ENCODE measurements at regions of chrX and their contacts with region 1.

Region 1: DNA sequence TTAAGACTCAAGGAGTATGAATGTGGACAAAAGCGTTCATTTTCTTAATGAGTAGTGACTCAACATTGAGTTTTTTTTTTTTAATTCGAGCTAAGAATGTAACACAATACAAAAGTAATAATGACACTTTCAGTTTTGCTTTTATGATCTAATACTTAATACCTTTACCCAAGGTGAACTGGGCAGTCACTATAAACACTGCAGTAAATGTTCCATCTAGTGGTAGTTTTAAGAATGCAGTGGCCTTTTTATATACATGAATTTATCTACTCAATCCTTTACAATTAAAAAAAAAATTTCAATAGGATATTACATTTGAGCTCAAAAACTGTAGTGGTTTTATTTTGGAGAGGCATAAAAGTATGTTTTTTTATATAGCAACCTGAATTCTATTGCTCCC is 33.9 kb downstream of the PDK3 start:
- DNase-seq: no peak
- H3K4me3 ChIP-seq: no peak overlapping the region
- H3K4me3 Mint-ChIP-seq: no peak overlapping the region
- H3K27ac Mint-ChIP-seq: no peak overlapping the region
- H3K4me1 ChIP-seq: no peaks in the 10 kb centered on the region
- H3K4me1 Mint-ChIP-seq: no peaks in the 10 kb centered on the region
- H3K27me3 ChIP-seq: no peaks in the 10 kb centered on the region
- H3K27me3 Mint-ChIP-seq: no peaks in the 10 kb centered on the region
- CTCF ChIP-seq: peak; percentile 14 to 34

Region 2: DNA sequence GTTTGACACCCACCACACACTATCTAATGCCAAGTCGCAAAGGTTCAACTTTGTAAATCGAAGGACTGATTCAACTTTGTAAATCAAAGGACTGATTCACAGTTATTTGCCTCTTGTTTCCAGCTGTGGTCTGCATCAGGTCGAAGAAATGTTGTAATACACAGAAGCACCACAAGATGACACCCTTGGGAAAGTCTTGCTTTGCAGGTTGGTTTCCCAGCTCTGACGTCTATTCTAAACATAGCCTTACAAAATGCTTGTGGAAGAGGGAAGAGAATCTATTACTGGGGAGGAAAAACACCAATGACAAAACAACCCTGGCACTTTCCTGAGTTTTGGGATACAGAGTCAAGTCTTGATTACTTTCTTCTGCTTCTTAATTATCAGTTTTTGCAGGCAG is 103.2 kb before region 1 on chrX:
- CTCF ChIA-PET with region 1: interaction called, 14 read pairs
- POLR2A ChIA-PET with region 1: no interaction called
- intact Hi-C with region 1: loop called (anchors 1 kb)
- DNase-seq: peak in 1 of 2 experiments; percentile 62
- H3K4me3 ChIP-seq: no peak overlapping the region
- H3K4me3 Mint-ChIP-seq: no peak overlapping the region
- H3K27ac Mint-ChIP-seq: no peak overlapping the region
- H3K4me1 ChIP-seq: no peaks in the 10 kb centered on the region
- H3K4me1 Mint-ChIP-seq: no peaks in the 10 kb centered on the region
- H3K27me3 ChIP-seq: no peaks in the 10 kb centered on the region
- H3K27me3 Mint-ChIP-seq: peaks cover 8% of the 10 kb centered on the region
- CTCF ChIP-seq: peak; percentile 35 to 57

Region 3: GRCh38 chrX:24464836-24465531 is 34.0 kb before region 1 on chrX and contains the start of gene PDK3:
- CTCF ChIA-PET with region 1: interaction called, 5 read pairs
- POLR2A ChIA-PET with region 1: no interaction called
- intact Hi-C with region 1: loop called (anchors 2 kb)
- DNase-seq: peak; percentile 82 to 86
- H3K4me3 ChIP-seq: peak within 1 kb of the TSS; percentile 78
- H3K4me3 Mint-ChIP-seq: peak within 1 kb of the TSS; percentile 72
- H3K27ac Mint-ChIP-seq: no peak within 1 kb of the TSS
- H3K4me1 ChIP-seq: no peaks in the 10 kb centered on the region
- H3K4me1 Mint-ChIP-seq: no peaks in the 10 kb centered on the region
- H3K27me3 ChIP-seq: no peaks in the 10 kb centered on the region
- H3K27me3 Mint-ChIP-seq: peaks cover 3% of the 10 kb centered on the region
- CTCF ChIP-seq: no peak
- total RNA-seq, gene PDK3: 4.0 and 4.9 TPM in 2 replicates

Measured in Caco-2 (cell line).